HepG2 (cell line): ENCODE measurements at regions of chr4 and their contacts with region 1.

Region 1: GRCh38 chr4:152045807-152046571 is 285.2 kb upstream of the GATB start:
- DNase-seq: peak; percentile 4
- ATAC-seq: peak; percentile 92
- H3K4me3 ChIP-seq: peak overlapping the region in 1 of 3 experiments; percentile 20; a peak in 1 of 6 replicates
- H3K27ac ChIP-seq: no peak overlapping the region
- H3K4me1 ChIP-seq: peaks cover 16% of the 10 kb centered on the region
- H3K27me3 ChIP-seq: peaks cover 0 to 25% of the 10 kb centered on the region in 2 experiments; a peak in 3 of 5 replicates
- CTCF ChIP-seq: peak; percentile 72
- EP300 ChIP-seq: no peak
- POLR2A ChIP-seq: no peak
- RAD21 ChIP-seq: no peak

Region 2: DNA sequence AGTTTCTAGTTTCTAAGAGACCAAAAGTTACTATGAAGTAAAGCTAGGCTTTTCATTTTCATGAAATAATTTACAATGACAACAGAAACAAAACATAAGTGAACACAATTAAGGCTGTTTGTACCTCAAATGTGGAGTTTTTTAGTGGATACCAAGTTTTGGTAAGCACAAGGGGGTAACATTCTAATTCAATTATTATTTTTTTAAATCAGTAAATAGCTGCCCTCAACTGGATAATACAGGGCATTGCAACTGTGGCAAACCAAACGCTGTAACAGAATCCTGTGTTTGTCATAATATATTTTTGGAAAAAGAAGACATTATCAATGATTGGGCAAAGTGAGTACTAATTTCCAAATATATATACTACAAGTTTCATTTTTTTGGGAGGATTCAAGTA is 339.6 kb after region 1 on chr4:
- CTCF ChIA-PET with region 1: no interaction called
- POLR2A ChIA-PET with region 1: no interaction called
- in situ Hi-C with region 1: no loop called
- intact Hi-C with region 1: loop called (anchors 5 kb)
- DNase-seq: no peak
- ATAC-seq: no peak
- H3K4me3 ChIP-seq: no peak overlapping the region
- H3K27ac ChIP-seq: no peak overlapping the region
- H3K4me1 ChIP-seq: no peaks in the 10 kb centered on the region
- H3K27me3 ChIP-seq: no peaks in the 10 kb centered on the region
- CTCF ChIP-seq: peak; percentile 24; the same call in 1 of the 2 replicates
- EP300 ChIP-seq: no peak
- POLR2A ChIP-seq: no peak
- RAD21 ChIP-seq: no peak